Right cardiac atrium (tissue), 5 donors: ENCODE measurements at regions of chr19 and their contacts with region 1.

Region 1: DNA sequence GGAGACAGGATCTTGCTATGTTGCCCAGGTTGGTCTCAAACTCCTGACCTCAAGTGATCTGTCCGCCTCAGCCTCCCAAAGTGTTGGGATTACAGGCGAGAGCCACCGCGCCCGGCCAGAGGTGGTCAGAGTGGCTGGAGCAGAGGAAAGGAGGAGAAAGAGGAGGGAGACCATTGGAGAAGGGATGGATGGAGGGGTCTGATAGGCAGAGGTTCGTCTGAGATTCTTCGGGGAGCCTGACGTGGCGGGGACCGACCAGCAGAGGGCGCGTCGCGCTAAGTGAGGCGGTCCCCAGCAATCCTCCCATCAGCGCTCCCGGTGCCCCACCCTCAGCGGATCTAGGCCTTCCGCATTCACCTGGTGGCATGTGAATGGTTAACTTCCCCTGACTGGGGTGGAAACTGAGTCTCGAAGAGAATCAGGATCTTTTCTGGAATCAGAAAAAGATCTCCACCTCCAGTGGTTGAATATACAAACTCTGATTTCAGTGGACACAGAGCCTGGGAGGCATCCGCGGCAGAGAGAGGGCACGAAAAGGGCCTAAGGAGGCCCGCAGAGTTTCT is 8.8 kb downstream of the GTPBP3 start:
- DNase-seq: peak; percentile 78 to 92 (median 92)
- ATAC-seq: peak; percentile 73 to 75
- H3K4me3 ChIP-seq: no peak overlapping the region
- H3K27ac ChIP-seq: no peak overlapping the region
- H3K4me1 ChIP-seq: no peaks in the 10 kb centered on the region
- H3K27me3 ChIP-seq: no peaks in the 10 kb centered on the region

Region 2: DNA sequence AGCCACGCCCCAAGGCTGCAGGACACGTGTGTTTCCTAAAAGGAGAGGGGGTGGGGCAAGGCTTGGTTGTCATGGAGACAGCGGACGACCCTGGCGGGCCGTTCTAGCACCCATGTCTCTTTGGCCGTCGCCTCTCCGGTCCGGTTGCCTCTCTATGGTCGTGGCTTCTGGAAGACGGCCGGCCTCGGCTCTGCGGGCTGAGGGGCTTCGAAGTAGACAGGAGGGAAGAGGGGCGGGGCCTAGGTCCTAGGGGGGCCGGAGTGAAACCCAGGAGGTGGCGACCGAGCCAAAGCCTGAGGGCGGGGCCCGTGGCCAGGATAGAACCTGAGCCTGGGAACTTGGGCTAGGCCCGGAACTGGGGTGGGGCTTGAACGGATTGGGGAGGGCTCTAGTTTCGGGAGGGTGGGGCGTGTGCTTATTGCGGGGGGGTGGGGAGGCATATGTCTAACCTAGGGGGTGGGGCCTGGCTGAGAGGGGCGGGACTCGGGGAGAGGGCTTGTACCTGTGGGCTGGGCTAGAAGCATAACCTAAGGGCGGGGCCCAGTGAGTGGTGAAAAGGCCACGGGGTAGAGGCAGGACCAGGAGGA is 123.4 kb after region 1 on chr19:
- intact Hi-C with region 1: loop called in 2 of 4 experiments (anchors 5 kb)
- DNase-seq: peak; percentile 97 to 99 (median 99)
- ATAC-seq: peak; percentile 86 to 87
- H3K4me3 ChIP-seq: peak overlapping the region; percentile 76
- H3K27ac ChIP-seq: peak overlapping the region; percentile 98
- H3K4me1 ChIP-seq: peaks cover 3% of the 10 kb centered on the region
- H3K27me3 ChIP-seq: no peaks in the 10 kb centered on the region

Region 3: GRCh38 chr19:17555929-17556813 is 210.0 kb after region 1 on chr19:
- intact Hi-C with region 1: no loop called
- DNase-seq: peak; percentile 81 to 90 (median 87)
- ATAC-seq: peak; percentile 67 to 73
- H3K4me3 ChIP-seq: peak overlapping the region; percentile 77
- H3K27ac ChIP-seq: peak overlapping the region; percentile 71
- H3K4me1 ChIP-seq: peaks cover 5% of the 10 kb centered on the region
- H3K27me3 ChIP-seq: no peaks in the 10 kb centered on the region